ENCODE measurements at regions of chr12 and their contacts with region 1.

Region 1: DNA sequence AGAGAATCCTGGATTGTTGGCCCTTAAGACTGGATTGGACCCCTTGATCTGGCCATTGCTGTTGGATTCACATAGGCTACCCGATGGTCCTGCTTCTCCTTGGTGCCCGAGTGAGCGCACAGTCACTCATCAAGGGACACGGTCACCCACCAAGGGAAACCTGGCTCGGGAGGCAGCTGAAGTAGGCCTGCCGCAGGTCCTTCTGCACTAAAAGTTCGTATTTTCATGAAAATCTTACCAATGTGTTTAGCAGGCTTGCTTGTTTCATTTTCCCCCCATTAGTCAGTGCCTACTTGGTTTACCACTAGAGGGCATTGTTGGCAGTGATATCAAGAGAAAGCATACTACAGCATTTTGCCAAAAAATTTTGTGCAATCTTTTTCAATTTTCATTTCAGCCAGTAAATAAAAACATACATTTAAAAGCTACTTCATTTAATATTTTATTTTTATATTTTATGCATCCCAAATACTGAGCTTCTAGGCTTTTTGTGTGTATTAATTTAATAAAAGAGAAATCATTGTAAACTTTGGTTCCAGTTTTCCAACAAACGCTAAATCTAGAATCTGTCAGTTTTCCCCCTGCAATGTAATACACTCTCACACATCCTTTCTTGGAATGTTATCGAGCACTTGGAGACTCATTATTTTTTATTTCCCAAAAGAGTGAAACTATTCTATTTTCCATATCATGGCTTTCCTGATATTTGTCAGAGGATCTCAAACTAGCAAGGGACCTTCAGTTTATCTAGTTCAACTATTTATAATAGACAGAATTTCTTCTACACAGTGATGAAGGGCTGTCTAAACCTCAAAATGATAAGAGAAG is 116.7 kb downstream of the LMNTD1 start:
- DNase-seq: peak in 1 of 3 donors; percentile 48
- ATAC-seq: peak; percentile 75 to 77
- H3K4me3 ChIP-seq: peak overlapping the region; percentile 29
- H3K27ac ChIP-seq: no peak overlapping the region
- H3K4me1 ChIP-seq: no peaks in the 10 kb centered on the region
- H3K27me3 ChIP-seq: no peaks in the 10 kb centered on the region

Region 2: GRCh38 chr12:25397001-25397400 is 39.4 kb before region 1 on chr12:
- intact Hi-C with region 1: no loop called
- DNase-seq: no peak
- ATAC-seq: no peak
- H3K4me3 ChIP-seq: no peak overlapping the region
- H3K27ac ChIP-seq: no peak overlapping the region
- H3K4me1 ChIP-seq: no peaks in the 10 kb centered on the region
- H3K27me3 ChIP-seq: no peaks in the 10 kb centered on the region

Region 3: GRCh38 chr12:25557830-25558436 is 121.5 kb after region 1 on chr12:
- intact Hi-C with region 1: loop called in 3 of 4 experiments (anchors 10 kb)
- DNase-seq: no peak
- ATAC-seq: no peak
- H3K4me3 ChIP-seq: no peak overlapping the region
- H3K27ac ChIP-seq: no peak overlapping the region
- H3K4me1 ChIP-seq: no peaks in the 10 kb centered on the region
- H3K27me3 ChIP-seq: no peaks in the 10 kb centered on the region

Region 4: DNA sequence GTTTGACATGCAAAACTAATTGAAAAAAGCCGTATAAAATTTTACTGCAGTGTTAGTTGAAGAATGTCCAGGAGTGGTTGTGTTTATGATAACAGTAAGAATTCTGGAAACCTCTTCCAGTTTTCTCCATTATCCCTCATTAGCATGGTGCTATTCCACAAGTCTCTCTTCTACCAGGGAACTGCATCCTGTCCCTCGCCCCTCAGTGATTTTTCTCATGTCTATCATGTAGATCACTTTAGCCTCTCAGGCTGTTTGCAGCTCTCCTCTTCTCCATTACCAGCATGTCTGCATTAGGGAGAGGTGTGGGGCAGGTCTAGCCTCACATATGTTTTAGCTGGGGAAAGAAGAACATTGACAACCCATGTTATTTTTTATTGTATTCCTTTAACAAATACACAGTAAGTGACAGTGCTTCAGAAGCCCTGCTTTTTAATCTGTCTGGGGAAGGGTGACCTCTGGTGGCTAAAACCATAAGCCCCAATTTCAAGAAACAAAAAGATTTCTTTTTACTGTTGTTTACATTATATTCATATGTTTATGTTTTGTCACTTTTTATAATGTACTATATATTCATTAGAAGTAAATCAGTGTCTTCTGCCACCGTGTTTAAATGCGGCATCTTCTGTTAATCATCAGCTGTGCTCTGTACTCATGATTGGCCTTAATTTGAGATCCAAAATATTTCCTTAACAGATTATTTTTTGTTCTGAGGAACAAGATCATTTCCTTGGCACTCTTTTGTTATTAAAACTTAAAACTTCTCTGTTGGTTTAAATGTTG is 592.7 kb after region 1 on chr12:
- intact Hi-C with region 1: loop called in 3 of 4 experiments (anchors 5 to 10 kb)
- DNase-seq: no peak
- ATAC-seq: peak; percentile 56 to 71
- H3K4me3 ChIP-seq: no peak overlapping the region
- H3K27ac ChIP-seq: no peak overlapping the region
- H3K4me1 ChIP-seq: peaks cover 6% of the 10 kb centered on the region
- H3K27me3 ChIP-seq: no peaks in the 10 kb centered on the region